GM13977 (cell line): ENCODE measurements at regions of chr19 and their contacts with region 1.

Region 1: DNA sequence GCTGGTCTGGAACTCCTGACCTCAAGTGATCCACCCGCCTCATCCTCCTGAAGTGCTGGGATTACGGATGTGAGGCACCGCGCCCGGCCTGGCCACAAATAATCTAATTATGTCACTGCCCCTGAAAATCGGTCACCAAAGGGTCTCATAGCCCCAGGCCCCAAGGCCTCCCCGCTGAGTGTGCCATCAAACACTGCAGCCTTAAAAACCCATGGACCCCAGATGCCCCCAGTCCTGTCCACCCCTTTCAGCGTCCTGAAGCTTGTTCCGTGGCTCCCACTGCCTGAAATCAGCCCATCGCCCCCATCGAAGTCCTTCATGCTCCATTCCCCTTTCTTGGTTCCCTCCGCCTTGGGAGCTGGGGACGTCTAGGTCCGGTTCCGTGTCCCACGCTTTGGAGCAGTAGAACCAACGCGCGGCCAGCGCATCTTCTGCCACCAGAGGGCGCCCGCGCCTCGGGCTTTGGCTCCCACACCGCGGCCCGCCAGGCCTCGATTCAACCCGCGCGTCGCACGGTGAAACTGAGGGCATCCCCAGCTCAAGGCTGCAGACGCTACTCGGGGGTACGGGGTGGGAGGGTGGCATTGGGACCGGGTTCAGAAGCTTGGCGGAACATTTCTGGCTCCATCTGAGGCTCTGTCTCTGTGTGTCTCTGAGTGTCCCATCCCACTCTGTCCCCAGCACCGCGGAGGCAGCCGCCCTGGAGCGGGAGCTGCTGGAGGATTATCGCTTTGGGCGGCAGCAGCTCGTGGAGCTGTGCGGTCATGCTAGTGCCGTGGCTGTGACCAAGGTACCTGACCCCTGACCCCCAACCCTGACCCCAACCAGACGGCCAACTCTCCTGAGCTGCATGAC is 3.5 kb downstream of the YJEFN3 start:
- DNase-seq: peak; percentile 90
- CTCF ChIP-seq: peak; percentile 98

Region 2: DNA sequence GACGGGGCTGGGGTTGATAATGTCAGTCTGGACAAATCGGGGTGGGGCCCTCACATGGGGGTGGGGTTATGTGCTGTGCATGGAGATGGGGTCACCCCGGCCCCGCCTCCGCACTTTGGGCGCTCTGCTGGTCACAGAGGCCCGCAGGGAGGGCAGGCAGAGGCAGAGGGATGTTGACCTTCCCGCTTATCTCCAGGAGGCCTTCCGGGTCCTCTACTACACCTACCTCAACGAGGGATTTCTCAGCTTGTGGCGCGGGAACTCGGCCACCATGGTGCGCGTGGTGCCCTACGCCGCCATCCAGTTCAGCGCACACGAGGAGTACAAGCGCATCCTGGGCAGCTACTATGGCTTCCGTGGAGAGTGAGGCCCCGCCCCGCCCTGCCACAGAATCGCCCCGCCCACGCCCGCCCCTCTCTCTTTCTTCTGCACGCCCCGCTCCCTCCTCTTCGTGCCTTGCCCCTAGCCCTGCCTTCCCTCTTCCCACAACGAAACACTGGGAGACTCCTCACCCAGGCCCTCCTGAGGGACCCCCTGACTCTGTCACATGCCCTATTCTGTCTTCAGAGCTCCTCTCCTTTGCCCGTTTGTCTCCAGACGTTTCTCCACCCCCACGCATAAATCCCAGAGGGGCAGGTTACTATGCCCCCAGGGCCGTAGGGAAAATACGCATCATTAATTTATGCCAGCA is 426.7 kb before region 1 on chr19:
- in situ Hi-C with region 1: no loop called
- DNase-seq: no peak
- CTCF ChIP-seq: no peak

Region 3: GRCh38 chr19:19485161-19485997 is 46.8 kb before region 1 on chr19:
- in situ Hi-C with region 1: no loop called
- DNase-seq: no peak
- CTCF ChIP-seq: no peak

Region 4: DNA sequence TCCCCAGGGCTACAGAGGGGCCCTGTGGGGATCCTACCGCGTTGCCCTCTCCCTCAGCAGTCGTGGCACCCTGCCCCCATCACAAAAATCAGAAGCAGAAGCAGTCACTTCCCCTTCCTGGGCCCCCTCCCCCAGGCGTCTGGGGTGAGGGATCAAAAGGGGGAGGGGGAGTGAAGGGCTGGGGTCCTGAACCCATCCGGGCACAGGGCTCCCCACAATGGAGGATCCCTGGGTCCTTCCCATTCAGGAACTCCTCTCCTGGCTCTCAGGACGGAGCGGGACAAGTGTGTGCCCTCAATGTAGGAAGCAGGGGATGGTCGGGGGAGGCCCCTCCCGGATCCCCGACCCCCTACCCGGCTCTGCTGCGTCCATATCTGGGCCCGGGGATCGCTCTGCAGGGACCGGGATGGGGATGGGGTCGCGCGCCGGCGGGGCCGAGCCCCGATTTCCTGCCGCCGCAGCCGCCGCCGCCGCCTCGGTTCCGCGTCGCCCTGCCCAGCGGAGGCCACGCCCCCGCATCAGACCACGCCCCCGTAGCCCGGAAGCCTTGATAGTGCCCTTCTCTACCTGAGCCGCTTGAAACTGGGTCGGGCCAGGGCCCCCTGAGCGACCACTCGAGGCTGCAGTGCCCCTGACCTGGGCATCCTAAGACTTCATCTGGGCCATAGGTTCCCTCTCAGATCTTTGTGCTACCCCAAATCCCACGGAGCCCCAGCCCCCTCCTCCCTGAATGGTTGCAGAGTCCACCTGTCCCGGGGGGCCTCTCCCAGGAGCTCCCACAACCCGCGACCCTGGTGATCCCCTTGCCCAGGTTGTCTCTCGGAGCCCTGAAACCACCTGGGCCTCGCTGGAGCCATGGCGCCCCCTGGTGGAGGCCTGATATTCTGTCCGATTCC is 111.2 kb after region 1 on chr19 and contains the start of gene GMIP:
- in situ Hi-C with region 1: loop called (anchors 10 kb)
- DNase-seq: peak; percentile 98
- CTCF ChIP-seq: peak; percentile 82

Region 5: GRCh38 chr19:19668230-19669012 is 136.2 kb after region 1 on chr19 and contains the start of gene ZNF101:
- in situ Hi-C with region 1: no loop called
- DNase-seq: peak; percentile 96
- CTCF ChIP-seq: no peak

Region 6: DNA sequence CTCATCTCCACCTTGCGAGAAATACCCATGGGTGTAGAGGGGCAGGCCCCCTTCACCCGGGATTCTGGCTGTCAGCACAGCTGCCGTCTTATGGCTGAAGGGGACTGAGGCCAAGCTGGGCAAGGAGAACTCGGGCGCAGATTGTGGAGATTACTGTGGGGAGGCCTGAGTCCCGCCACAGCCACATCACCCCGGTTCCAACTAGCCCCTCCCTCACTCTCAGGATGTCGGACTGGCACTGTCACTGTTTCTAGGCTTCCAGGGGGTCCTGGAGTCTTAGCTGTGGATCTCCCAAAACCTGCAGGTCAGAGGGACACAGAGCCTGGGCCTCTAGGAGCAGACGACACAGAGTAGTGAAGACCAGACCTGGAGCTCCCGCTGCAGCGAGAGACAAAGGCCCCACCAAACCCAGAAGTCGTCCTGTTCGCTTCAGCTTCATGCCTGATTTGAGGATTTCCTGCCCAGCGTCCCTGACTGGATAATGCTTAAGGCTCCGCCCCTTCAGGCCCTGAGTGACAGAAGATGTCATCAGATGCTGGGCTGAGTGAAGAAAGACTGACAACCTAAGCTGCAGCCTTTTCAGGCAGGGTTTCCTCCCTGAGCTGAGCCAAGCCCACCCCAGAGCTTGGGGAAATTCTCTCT is 424.4 kb after region 1 on chr19:
- in situ Hi-C with region 1: loop called (anchors 25 kb)
- DNase-seq: no peak
- CTCF ChIP-seq: no peak

Region 7: GRCh38 chr19:20237761-20238623 is 705.8 kb after region 1 on chr19:
- in situ Hi-C with region 1: loop called (anchors 25 kb)
- DNase-seq: peak; percentile 48
- CTCF ChIP-seq: peak; percentile 30